ENCODE measurements at regions of chr5 and their contacts with region 1.

Region 1: GRCh38 chr5:5421961-5422818 is at the start of gene ICE1:
- DNase-seq: peak; percentile 86 to 100 (median 96)
- ATAC-seq: peak; percentile 88 to 89
- H3K4me3 Mint-ChIP-seq: peak within 1 kb of the TSS in 8 of 10 donors; percentile 91 to 98 (median 94)
- H3K27ac Mint-ChIP-seq: peak within 1 kb of the TSS in 8 of 10 donors; percentile 98 to 99 (median 98)
- H3K4me1 Mint-ChIP-seq: peaks cover 14 to 19% (median 17%) of the 10 kb centered on the region in 4 donors
- H3K27me3 Mint-ChIP-seq: no peaks in the 10 kb centered on the region
- polyA plus RNA-seq, gene ICE1: 16.1 to 18.8 (median 16.3) TPM

Region 2: DNA sequence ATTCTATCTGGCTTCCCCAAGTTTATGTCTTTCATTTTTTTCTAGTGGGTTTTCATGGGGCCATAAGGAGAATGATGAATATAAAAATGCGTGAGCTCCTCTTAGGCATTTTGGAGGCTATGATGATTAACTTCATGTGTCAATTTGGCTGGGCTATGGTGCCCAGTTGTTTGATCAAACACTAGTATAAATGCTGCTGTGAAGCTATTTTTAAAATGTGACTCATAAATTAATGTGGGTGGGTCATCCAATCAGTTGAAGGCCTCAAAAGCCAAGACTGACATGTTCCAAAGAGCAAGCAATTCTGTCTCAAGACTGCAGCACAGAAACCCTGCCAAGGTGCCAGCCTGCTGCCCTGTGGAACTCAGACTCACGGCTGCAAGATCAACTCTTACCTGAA is 24.1 kb before region 1 on chr5:
- POLR2A ChIA-PET with region 1: no interaction called
- DNase-seq: no peak
- ATAC-seq: no peak
- H3K4me3 Mint-ChIP-seq: no peak overlapping the region
- H3K27ac Mint-ChIP-seq: peak overlapping the region in 1 of 10 donors; percentile 16
- H3K4me1 Mint-ChIP-seq: no peaks in the 10 kb centered on the region
- H3K27me3 Mint-ChIP-seq: no peaks in the 10 kb centered on the region

Region 3: GRCh38 chr5:5436206-5436759 is 14.1 kb after region 1 on chr5:
- POLR2A ChIA-PET with region 1: interaction called, 10 read pairs
- DNase-seq: no peak
- ATAC-seq: no peak
- H3K4me3 Mint-ChIP-seq: no peak overlapping the region
- H3K27ac Mint-ChIP-seq: no peak overlapping the region
- H3K4me1 Mint-ChIP-seq: peaks cover 0 to 34% (median 19%) of the 10 kb centered on the region in 4 donors
- H3K27me3 Mint-ChIP-seq: no peaks in the 10 kb centered on the region

Region 4: GRCh38 chr5:5454391-5454790 is 32.2 kb after region 1 on chr5:
- POLR2A ChIA-PET with region 1: no interaction called
- DNase-seq: no peak
- ATAC-seq: no peak
- H3K4me3 Mint-ChIP-seq: no peak overlapping the region
- H3K27ac Mint-ChIP-seq: no peak overlapping the region
- H3K4me1 Mint-ChIP-seq: peaks cover 0 to 9% (median 0%) of the 10 kb centered on the region in 4 donors
- H3K27me3 Mint-ChIP-seq: no peaks in the 10 kb centered on the region

Region 5: GRCh38 chr5:5494489-5495402 is 72.6 kb after region 1 on chr5:
- POLR2A ChIA-PET with region 1: interaction called, 10 read pairs
- DNase-seq: peak; percentile 68 to 88 (median 80)
- ATAC-seq: peak; percentile 96
- H3K4me3 Mint-ChIP-seq: peak overlapping the region in 9 of 10 donors; percentile 11 to 73 (median 67)
- H3K27ac Mint-ChIP-seq: peak overlapping the region in 1 of 10 donors; percentile 56
- H3K4me1 Mint-ChIP-seq: peaks cover 14 to 31% (median 24%) of the 10 kb centered on the region in 4 donors
- H3K27me3 Mint-ChIP-seq: peaks cover 0 to 6% (median 0%) of the 10 kb centered on the region in 5 donors

Region 6: GRCh38 chr5:5505815-5506214 is 83.6 kb after region 1 on chr5:
- POLR2A ChIA-PET with region 1: no interaction called
- DNase-seq: no peak
- ATAC-seq: no peak
- H3K4me3 Mint-ChIP-seq: no peak overlapping the region
- H3K27ac Mint-ChIP-seq: no peak overlapping the region
- H3K4me1 Mint-ChIP-seq: no peaks in the 10 kb centered on the region
- H3K27me3 Mint-ChIP-seq: peaks cover 14 to 67% (median 32%) of the 10 kb centered on the region in 5 donors

Region 7: DNA sequence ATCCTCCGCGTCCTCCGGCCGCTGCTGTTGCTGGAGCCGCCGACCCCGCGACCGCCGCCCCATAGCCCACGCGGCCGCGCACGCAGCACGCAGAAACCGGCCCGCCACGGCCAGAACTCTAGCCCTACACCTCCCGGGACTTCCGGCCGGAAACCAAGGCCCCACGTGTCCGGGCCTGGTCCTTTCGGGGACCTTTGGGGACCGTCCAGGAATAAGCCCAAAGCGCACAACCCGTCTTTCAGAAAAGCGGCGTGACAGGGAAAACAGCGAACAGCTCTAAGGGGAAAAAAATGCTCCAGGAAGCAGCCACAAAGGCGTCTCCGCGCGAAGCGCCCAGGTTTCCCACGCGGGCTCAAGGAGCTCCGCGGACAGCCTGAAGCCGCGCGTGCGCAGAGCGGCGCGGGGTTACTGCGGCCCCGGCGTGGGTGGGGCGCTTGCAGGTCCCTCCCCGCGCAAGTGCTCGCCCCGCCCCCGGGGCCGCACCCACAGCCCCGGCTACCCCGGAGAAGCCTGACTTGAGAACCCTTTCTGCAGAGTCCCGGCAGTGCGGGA is 1210.8 kb after region 1 on chr5 and contains the starts of genes NSUN2 and SRD5A1:
- POLR2A ChIA-PET with region 1: interaction called, 16 read pairs
- DNase-seq: peak; percentile 84 to 98 (median 93)
- ATAC-seq: peak; percentile 88 to 89
- H3K4me3 Mint-ChIP-seq: peak within 1 kb of the TSS; percentile 90 to 98 (median 94)
- H3K27ac Mint-ChIP-seq: peak within 1 kb of the TSS; percentile 92 to 99 (median 97)
- H3K4me1 Mint-ChIP-seq: peaks cover 20 to 57% (median 51%) of the 10 kb centered on the region in 4 donors
- H3K27me3 Mint-ChIP-seq: peaks cover 0 to 6% (median 0%) of the 10 kb centered on the region in 5 donors
- polyA plus RNA-seq, gene NSUN2: 18.3 to 48.7 (median 27.8) TPM
- polyA plus RNA-seq, gene SRD5A1: 4.3 to 6.8 (median 4.4) TPM

Region 8: GRCh38 chr5:6712577-6713275 is 1290.5 kb after region 1 on chr5:
- POLR2A ChIA-PET with region 1: interaction called, 10 read pairs
- DNase-seq: peak in 9 of 10 donors; percentile 95 to 99 (median 97)
- ATAC-seq: peak; percentile 70 to 78
- H3K4me3 Mint-ChIP-seq: peak overlapping the region; percentile 83 to 92 (median 89)
- H3K27ac Mint-ChIP-seq: peak overlapping the region; percentile 72 to 97 (median 94)
- H3K4me1 Mint-ChIP-seq: peaks cover 21 to 37% (median 34%) of the 10 kb centered on the region in 4 donors
- H3K27me3 Mint-ChIP-seq: no peaks in the 10 kb centered on the region

Measured in naive thymus-derived CD8-positive, alpha-beta T cell (primary cell).